ENCODE measurements at regions of chr21 and their contacts with region 1.

Region 1: DNA sequence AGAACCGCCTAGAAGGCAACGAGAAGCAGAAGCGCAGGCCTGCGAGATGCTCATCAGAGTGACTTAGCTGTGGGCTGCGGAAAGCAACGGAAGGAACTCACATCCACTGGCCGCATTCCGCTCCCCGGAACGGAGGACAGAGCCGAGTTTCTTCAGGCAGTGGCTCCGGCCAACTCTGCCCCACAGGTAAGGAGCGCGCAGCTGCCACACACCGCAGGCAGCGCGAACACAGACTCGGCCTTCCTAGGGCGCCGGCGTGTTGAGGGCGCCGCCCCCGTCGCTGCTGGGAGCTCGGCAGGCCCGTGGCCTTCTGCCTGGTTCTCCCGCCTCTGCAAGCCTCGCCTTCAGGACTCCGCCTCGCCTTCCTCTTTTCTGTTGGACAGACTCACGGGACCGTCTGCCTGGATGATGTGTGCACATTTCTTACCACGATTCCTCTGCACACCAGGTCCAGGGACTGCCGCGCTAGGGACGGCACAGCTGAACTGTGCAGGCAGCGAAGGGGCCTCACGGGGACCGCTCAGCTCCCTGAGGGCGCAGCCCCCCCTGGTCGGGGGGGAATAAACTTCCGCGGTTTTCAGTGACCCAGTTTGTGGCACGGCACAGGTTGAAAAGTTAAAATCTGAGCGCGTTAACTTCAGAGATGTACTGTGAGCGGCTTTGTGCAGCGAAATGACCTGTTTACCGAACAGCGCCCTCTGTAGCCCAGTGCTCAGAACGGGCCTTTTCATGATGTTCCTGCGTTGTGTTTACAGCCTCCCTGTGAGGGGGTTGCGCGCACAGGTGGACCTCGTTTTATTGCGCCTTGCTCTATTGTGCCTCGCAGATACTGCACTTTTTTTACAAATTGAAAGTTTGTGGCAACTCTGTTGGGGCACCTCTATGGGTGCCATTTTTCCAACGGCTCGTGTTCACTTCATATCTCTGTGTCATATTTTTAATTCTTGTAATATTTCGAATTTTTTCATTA is 15.8 kb downstream of the TCP10L start:
- DNase-seq: peak; percentile 71 to 86 (median 80)
- H3K4me3 ChIP-seq: peak overlapping the region; percentile 48
- H3K27ac ChIP-seq: peak overlapping the region; percentile 26 to 77
- H3K4me1 ChIP-seq: peaks cover 4% of the 10 kb centered on the region
- H3K27me3 ChIP-seq: no peaks in the 10 kb centered on the region
- CTCF ChIP-seq: peak; percentile 68 to 75 (median 75)
- EP300 ChIP-seq: no peak
- POLR2A ChIP-seq: no peak

Region 2: GRCh38 chr21:32135401-32136363 is 433.9 kb before region 1 on chr21:
- intact Hi-C with region 1: no loop called
- DNase-seq: no peak
- H3K4me3 ChIP-seq: no peak overlapping the region
- H3K27ac ChIP-seq: no peak overlapping the region
- H3K4me1 ChIP-seq: peaks cover 2% of the 10 kb centered on the region
- H3K27me3 ChIP-seq: no peaks in the 10 kb centered on the region
- CTCF ChIP-seq: no peak
- EP300 ChIP-seq: no peak
- POLR2A ChIP-seq: no peak

Region 3: GRCh38 chr21:32298148-32298559 is 271.4 kb before region 1 on chr21:
- intact Hi-C with region 1: loop called in 1 of 4 experiments (anchors 10 kb)
- DNase-seq: peak in 2 of 5 donors; percentile 54 to 66
- H3K4me3 ChIP-seq: no peak overlapping the region
- H3K27ac ChIP-seq: no peak overlapping the region
- H3K4me1 ChIP-seq: peaks cover 2% of the 10 kb centered on the region
- H3K27me3 ChIP-seq: no peaks in the 10 kb centered on the region
- CTCF ChIP-seq: no peak
- EP300 ChIP-seq: no peak
- POLR2A ChIP-seq: no peak

Region 4: DNA sequence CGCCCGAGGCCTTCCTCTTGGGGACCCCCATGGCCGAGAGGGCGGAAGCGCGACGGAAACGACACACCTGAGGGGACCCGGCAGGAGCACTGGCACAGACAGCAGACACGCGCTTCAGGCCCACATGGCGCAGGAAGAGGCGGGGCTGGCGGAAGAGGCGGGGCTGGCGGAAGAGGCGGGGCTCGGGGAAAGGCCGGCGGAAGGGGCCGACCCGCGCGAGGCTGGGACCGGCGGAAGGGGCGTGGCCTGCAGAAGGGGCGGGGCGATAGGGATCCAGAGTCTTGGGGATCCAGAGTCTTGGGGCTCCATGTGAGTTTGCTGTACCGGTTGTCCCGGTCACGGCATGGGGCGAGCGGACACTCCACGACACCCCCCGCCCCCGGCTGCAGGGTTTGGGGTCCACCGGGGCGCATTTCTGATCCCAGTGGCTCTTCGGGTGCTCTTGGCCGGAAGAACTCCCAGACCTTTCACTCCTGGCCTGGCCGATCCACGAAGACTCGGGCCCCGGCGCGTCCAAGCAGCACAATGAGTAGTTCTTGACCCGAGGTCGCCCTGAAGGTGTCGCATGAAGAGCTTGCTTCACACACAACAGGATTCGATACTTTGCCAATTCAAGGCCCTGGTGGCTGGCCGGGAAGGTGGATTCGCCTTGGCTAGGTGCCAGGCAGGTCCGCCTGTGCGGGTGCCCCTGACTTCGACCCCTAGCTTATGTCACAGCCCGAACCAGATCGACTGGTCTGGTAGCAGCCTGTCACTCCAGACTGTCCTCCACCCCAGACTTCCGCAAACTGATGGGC is 176.5 kb before region 1 on chr21 and contains the start of gene URB1:
- intact Hi-C with region 1: loop called in 1 of 4 experiments (anchors 2 kb)
- DNase-seq: peak; percentile 93 to 98 (median 97)
- H3K4me3 ChIP-seq: peak within 1 kb of the TSS; percentile 98
- H3K27ac ChIP-seq: no peak within 1 kb of the TSS
- H3K4me1 ChIP-seq: peaks cover 5% of the 10 kb centered on the region
- H3K27me3 ChIP-seq: no peaks in the 10 kb centered on the region
- CTCF ChIP-seq: no peak
- EP300 ChIP-seq: no peak
- POLR2A ChIP-seq: peak; percentile 77
- total RNA-seq, gene URB1: 14.4 to 29.6 (median 19.6) TPM

Region 5: DNA sequence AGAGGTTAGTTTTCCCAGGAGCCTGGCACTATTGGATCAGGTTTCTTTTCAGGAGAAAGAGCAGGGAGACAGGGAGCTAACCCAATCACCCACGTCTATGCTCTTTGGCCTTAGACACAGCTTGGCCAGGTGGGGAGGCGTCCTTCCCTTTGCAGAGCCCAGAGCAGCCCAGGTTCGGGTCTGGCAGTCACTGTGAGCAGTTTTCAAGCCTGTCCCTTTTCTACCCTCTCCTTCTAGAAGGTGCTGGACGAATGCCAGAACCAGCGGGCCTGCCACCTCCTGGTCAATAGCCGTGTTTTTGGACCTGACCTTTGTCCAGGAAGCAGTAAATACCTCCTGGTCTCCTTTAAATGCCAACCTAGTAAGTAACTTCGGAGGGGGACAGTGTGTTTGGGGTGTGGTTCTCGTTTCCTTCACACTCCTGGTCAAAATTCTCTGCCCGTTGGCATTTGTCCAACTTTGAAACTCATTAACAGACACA is 112.1 kb before region 1 on chr21:
- intact Hi-C with region 1: loop called in 1 of 4 experiments (anchors 10 kb)
- DNase-seq: peak; percentile 48 to 68 (median 62)
- H3K4me3 ChIP-seq: no peak overlapping the region
- H3K27ac ChIP-seq: peak overlapping the region; percentile 60 to 70
- H3K4me1 ChIP-seq: peaks cover 18% of the 10 kb centered on the region
- H3K27me3 ChIP-seq: no peaks in the 10 kb centered on the region
- CTCF ChIP-seq: peak in 1 of 3 donors; percentile 5
- EP300 ChIP-seq: no peak
- POLR2A ChIP-seq: no peak